OCI-LY7 (cell line): ENCODE measurements at regions of chr12 and their contacts with region 1.

Region 1: GRCh38 chr12:96399919-96400797 is at the start of gene CDK17:
- DNase-seq: peak; percentile 90
- H3K4me3 ChIP-seq: peak within 1 kb of the TSS; percentile 94
- H3K27ac ChIP-seq: peak within 1 kb of the TSS; percentile 96
- H3K4me1 ChIP-seq: peaks cover 64% of the 10 kb centered on the region
- CTCF ChIP-seq: no peak
- total RNA-seq, gene CDK17: 34.5 and 36.3 TPM in 2 replicates

Region 2: DNA sequence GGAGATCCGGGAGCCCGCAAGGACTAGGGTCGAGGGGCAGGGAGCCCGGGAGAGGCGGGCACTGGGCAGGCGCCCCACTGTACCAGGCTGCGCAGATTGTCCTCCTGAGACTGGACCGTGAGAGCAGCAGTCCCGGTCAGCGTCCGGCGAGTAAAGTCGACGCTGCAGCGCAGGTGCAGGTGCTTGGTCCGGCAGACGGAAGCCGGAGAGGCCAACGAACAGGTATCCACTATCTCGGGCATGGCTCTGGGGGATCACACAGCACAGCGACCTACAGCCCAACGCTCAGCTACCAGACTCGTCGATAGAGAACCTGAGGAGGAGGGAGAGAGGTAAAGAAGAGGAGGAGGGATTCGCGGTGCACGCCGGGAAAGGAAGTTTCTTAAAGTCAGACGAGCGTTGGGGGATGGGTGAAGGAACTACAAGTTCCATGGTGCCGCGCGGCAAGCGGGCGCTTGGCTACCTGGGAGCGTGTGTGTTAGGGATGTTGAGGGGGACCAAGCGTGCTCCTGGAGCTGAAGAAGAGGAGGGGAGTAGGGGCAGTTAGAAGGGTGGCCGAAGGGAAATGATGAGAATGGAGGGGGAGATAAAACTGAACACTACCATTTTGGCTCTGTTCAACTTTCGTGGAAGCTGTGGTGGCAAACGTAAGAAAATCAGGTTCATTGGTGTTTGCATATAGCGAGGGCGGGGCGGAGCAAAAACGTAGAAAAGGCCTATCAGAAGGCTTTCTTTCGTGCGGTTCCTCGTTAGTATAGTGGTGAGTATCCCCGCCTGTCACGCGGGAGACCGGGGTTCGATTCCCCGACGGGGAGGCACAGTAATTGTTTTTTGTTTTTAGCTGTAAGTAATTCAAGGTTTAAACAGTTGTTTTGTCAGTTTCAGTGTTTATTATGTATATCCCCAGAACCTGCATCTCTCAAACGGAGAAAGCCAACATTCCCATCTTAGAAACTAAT is 364.6 kb before region 1 on chr12 and contains the start of gene LTA4H:
- CTCF ChIA-PET with region 1: no interaction called
- POLR2A ChIA-PET with region 1: no interaction called
- intact Hi-C with region 1: loop called (anchors 10 kb)
- DNase-seq: peak; percentile 99
- H3K4me3 ChIP-seq: peak within 1 kb of the TSS; percentile 94
- H3K27ac ChIP-seq: peak within 1 kb of the TSS; percentile 59
- H3K4me1 ChIP-seq: peaks cover 22% of the 10 kb centered on the region
- CTCF ChIP-seq: no peak
- total RNA-seq, gene LTA4H: 75.6 and 86.7 TPM in 2 replicates

Region 3: DNA sequence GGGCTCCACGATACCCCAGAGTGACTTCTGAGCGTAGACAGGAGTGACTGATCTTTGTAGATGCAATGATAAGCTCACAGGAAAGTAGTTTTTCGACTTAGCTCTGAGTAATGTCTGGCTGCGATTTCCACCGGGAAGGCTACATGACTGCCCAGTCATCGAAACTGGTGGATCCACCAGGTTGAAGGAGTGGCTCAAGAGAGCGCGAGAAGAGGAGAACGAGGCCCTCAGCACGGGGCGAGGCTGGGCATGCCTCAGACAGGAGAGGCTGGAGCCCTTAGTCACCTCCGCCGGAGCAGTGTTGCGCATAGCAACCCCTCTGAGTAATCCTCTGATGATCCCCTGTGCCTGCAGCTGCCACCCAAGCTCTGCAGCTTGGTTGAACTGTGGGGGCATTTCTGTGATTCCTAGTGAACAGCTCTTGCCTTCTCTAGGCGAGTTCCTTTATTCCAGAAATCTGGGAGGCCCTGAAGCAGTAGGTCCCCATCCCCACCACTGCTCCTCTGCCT is 180.4 kb before region 1 on chr12:
- CTCF ChIA-PET with region 1: interaction called, 3 read pairs
- POLR2A ChIA-PET with region 1: interaction called, 6 read pairs
- intact Hi-C with region 1: loop called (anchors 2 kb)
- DNase-seq: no peak
- H3K4me3 ChIP-seq: no peak overlapping the region
- H3K27ac ChIP-seq: no peak overlapping the region
- H3K4me1 ChIP-seq: peaks cover 9% of the 10 kb centered on the region
- CTCF ChIP-seq: no peak

Region 4: DNA sequence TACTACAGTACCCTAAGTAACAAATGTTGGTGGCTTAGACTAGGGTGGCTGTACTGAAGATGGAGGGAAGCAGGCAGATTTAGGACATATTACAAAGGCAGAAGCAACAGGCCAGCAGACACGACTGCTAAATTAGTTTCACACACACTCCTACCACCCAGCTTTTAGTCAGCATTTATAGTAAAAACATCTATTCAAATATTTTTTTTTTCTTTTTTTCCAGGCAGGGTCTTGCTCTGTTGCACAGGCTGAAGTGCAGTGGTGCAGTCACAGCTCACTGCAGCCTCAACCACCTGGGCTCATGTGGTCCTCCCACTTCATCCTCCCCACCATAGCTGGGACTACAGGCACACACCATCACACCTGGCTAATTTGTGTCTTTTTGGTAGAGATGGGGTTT is 72.8 kb before region 1 on chr12:
- CTCF ChIA-PET with region 1: interaction called, 3 read pairs
- POLR2A ChIA-PET with region 1: interaction called, 6 read pairs
- intact Hi-C with region 1: loop called (anchors 2 kb)
- DNase-seq: peak; percentile 93
- H3K4me3 ChIP-seq: peak overlapping the region; percentile 56
- H3K27ac ChIP-seq: peak overlapping the region; percentile 96
- H3K4me1 ChIP-seq: peaks cover 76% of the 10 kb centered on the region
- CTCF ChIP-seq: no peak

Region 5: DNA sequence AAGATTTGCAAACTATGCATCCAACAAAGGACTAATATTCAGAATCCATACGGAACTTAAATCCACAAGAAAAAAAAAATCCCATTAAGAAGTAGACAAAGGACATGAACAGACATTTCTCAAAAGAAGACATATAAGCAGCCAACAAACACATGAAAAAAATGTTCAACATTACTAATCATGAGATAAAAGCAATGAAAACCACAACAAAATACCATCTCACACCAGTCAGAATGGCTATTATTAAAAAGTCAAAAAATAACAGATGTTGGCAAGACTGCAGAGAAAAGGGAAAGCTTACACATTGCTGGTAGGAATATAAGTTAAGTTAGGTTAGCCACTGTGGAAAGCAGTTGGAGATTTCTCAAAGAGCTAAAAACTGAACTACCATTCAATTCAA is 16.2 kb before region 1 on chr12:
- CTCF ChIA-PET with region 1: interaction called, 3 read pairs
- POLR2A ChIA-PET with region 1: interaction called, 17 read pairs
- intact Hi-C with region 1: no loop called
- DNase-seq: no peak
- H3K4me3 ChIP-seq: no peak overlapping the region
- H3K27ac ChIP-seq: no peak overlapping the region
- H3K4me1 ChIP-seq: peaks cover 36% of the 10 kb centered on the region
- CTCF ChIP-seq: no peak

Region 6: GRCh38 chr12:96516472-96517430 is 116.6 kb after region 1 on chr12:
- CTCF ChIA-PET with region 1: no interaction called
- POLR2A ChIA-PET with region 1: no interaction called
- intact Hi-C with region 1: loop called (anchors 2 kb)
- DNase-seq: peak; percentile 85
- H3K4me3 ChIP-seq: no peak overlapping the region
- H3K27ac ChIP-seq: no peak overlapping the region
- H3K4me1 ChIP-seq: peaks cover 14% of the 10 kb centered on the region
- CTCF ChIP-seq: peak; percentile 93